ENCODE measurements at regions of chr17 and their contacts with region 1.

Region 1: DNA sequence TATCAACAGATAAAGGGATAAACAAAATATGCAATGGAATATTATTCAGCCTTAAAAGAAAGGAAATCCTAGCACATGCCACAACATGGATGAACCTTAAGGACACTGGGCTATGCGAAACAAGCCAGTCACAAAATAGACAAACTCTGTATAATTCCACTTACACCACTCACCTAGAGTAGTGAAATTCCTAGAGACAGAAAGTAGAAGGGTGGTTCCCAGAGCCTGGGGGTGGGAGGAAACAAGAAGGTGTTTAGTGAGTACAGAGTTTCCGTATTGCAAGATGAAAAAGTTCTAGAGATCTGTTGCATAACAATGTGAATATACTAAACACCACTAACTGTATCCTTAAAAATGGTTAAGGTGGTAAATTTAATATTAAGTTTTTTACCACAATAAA is 10.0 kb downstream of the SPOP start:
- DNase-seq: no peak
- H3K4me3 ChIP-seq: no peak overlapping the region
- H3K4me3 Mint-ChIP-seq: no peak overlapping the region
- H3K27ac Mint-ChIP-seq: no peak overlapping the region
- H3K4me1 ChIP-seq: no peaks in the 10 kb centered on the region
- H3K4me1 Mint-ChIP-seq: no peaks in the 10 kb centered on the region
- H3K27me3 ChIP-seq: no peaks in the 10 kb centered on the region
- H3K27me3 Mint-ChIP-seq: no peaks in the 10 kb centered on the region
- CTCF ChIP-seq: no peak

Region 2: GRCh38 chr17:49390548-49391324 is 277.1 kb before region 1 on chr17:
- CTCF ChIA-PET with region 1: no interaction called
- POLR2A ChIA-PET with region 1: no interaction called
- intact Hi-C with region 1: no loop called
- DNase-seq: no peak
- H3K4me3 ChIP-seq: no peak overlapping the region
- H3K4me3 Mint-ChIP-seq: no peak overlapping the region
- H3K27ac Mint-ChIP-seq: no peak overlapping the region
- H3K4me1 ChIP-seq: peaks cover 9% of the 10 kb centered on the region; the same call in 1 of the 2 replicates
- H3K4me1 Mint-ChIP-seq: no peaks in the 10 kb centered on the region
- H3K27me3 ChIP-seq: no peaks in the 10 kb centered on the region
- H3K27me3 Mint-ChIP-seq: no peaks in the 10 kb centered on the region
- CTCF ChIP-seq: no peak

Region 3: GRCh38 chr17:49687878-49688491 is 20.1 kb after region 1 on chr17:
- CTCF ChIA-PET with region 1: no interaction called
- POLR2A ChIA-PET with region 1: interaction called, 15 read pairs
- intact Hi-C with region 1: no loop called
- DNase-seq: peak in 1 of 2 experiments; percentile 38
- H3K4me3 ChIP-seq: no peak overlapping the region
- H3K4me3 Mint-ChIP-seq: no peak overlapping the region
- H3K27ac Mint-ChIP-seq: no peak overlapping the region
- H3K4me1 ChIP-seq: peaks cover 5% of the 10 kb centered on the region
- H3K4me1 Mint-ChIP-seq: peaks cover 7% of the 10 kb centered on the region
- H3K27me3 ChIP-seq: no peaks in the 10 kb centered on the region
- H3K27me3 Mint-ChIP-seq: peaks cover 7% of the 10 kb centered on the region
- CTCF ChIP-seq: no peak

Region 4: DNA sequence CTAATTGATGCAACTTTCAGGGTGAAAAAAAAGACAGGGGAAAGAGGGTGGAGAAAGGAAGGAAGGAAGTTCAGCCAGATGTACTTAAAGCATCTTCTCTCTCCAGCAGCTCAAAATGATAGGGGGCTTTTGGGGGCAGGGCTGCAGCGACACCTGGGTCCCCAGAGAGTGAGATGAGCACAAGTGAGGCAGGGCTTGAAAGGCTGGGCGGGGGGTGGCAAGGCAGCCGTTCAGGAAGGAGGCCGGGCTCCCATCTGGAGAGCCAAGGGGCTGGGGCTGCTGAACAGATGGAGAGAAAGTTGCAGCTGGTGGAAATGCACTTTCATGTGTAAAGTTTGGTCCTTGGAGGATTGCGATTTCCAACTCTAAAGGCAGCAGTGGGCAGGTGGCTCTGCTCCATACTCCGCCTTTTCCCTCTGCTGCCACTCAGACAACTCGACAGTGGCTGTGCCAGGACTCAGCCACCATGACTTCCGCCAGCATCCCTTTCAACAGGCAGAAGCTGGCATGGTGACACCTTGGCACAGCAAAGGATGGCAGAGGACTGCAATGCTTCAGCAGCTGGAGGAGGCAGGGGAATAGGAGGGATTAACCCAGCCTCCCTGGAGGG is 32.2 kb after region 1 on chr17:
- CTCF ChIA-PET with region 1: no interaction called
- POLR2A ChIA-PET with region 1: no interaction called
- intact Hi-C with region 1: no loop called
- DNase-seq: no peak
- H3K4me3 ChIP-seq: no peak overlapping the region
- H3K4me3 Mint-ChIP-seq: no peak overlapping the region
- H3K27ac Mint-ChIP-seq: no peak overlapping the region
- H3K4me1 ChIP-seq: no peaks in the 10 kb centered on the region; the same call in 1 of the 2 replicates
- H3K4me1 Mint-ChIP-seq: peaks cover 16% of the 10 kb centered on the region
- H3K27me3 ChIP-seq: no peaks in the 10 kb centered on the region
- H3K27me3 Mint-ChIP-seq: no peaks in the 10 kb centered on the region
- CTCF ChIP-seq: no peak

Region 5: GRCh38 chr17:49779739-49780231 is 111.9 kb after region 1 on chr17:
- CTCF ChIA-PET with region 1: interaction called, 11 read pairs
- POLR2A ChIA-PET with region 1: no interaction called
- intact Hi-C with region 1: no loop called
- DNase-seq: peak in 1 of 2 experiments; percentile 71
- H3K4me3 ChIP-seq: no peak overlapping the region
- H3K4me3 Mint-ChIP-seq: no peak overlapping the region
- H3K27ac Mint-ChIP-seq: no peak overlapping the region
- H3K4me1 ChIP-seq: peaks cover 4% of the 10 kb centered on the region; the same call in 1 of the 2 replicates
- H3K4me1 Mint-ChIP-seq: no peaks in the 10 kb centered on the region
- H3K27me3 ChIP-seq: no peaks in the 10 kb centered on the region
- H3K27me3 Mint-ChIP-seq: peaks cover 20% of the 10 kb centered on the region
- CTCF ChIP-seq: peak; percentile 91 to 94